Activated T-helper 1 cell treated with anti-CD3 and anti-CD28 coated beads, Interleukin-12 subunit alpha, Interleukin-12 subunit beta, Interleukin-2, Interleukin-4 antibody, amounts not matched to agents 30 ng/mL and 10 ng/mL and 1 ng/mL, durations not matched to agents 14 hours and 24 hours and 36 hours (primary cell): ENCODE measurements at regions of chr1 and their contacts with region 1.

Region 1: GRCh38 chr1:32072622-32073298 is at the start of gene TMEM39B:
- DNase-seq: peak; percentile 93
- H3K4me3 Mint-ChIP-seq: peak within 1 kb of the TSS; percentile 92
- H3K27ac Mint-ChIP-seq: peak within 1 kb of the TSS; percentile 95
- H3K4me1 Mint-ChIP-seq: peaks cover 45% of the 10 kb centered on the region
- H3K27me3 Mint-ChIP-seq: no peaks in the 10 kb centered on the region
- total RNA-seq, gene TMEM39B: 34.2 and 38.8 TPM in 2 replicates

Region 2: DNA sequence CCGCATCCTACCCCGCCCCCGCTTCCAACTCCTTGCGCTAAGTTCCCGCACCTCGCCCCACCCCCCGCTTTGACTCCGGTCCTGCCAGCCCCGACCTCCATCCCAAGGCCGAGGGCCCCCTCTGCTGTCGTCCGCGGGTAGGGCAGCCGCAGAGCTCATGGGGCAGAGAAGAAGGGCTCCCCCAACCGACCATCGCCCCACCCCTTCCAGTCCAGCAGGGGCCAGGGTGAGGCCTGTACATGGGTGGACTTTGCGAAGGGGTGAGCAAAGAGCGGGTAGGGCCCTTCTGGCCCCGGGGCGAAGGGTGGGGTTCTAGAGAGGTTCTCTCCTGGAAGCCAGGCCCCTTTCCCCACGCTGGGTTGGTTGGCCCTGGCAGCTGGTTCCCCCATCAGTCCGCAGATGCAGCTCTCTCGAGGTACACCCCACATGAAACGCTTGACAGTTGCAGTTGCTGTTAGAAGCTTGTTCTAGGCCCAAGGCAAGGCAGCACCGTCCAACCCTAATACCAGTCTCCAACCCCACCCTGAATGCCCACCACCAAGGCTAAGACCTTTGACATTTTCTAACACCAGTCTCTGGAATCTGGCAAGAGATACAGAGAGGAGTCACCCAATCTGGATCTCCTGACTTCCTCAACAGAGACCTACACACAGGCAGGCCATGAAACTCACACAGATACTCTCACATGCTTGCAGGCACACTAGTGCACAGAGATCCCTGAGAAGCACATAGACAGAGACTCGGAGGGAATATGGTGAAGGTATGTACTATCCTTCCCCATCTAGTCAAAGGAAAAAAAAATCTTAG is 283.3 kb before region 1 on chr1:
- intact Hi-C with region 1: loop called (anchors 2 kb)
- DNase-seq: peak; percentile 91
- H3K4me3 Mint-ChIP-seq: peak overlapping the region; percentile 89
- H3K27ac Mint-ChIP-seq: no peak overlapping the region
- H3K4me1 Mint-ChIP-seq: peaks cover 16% of the 10 kb centered on the region
- H3K27me3 Mint-ChIP-seq: peaks cover 4% of the 10 kb centered on the region

Region 3: DNA sequence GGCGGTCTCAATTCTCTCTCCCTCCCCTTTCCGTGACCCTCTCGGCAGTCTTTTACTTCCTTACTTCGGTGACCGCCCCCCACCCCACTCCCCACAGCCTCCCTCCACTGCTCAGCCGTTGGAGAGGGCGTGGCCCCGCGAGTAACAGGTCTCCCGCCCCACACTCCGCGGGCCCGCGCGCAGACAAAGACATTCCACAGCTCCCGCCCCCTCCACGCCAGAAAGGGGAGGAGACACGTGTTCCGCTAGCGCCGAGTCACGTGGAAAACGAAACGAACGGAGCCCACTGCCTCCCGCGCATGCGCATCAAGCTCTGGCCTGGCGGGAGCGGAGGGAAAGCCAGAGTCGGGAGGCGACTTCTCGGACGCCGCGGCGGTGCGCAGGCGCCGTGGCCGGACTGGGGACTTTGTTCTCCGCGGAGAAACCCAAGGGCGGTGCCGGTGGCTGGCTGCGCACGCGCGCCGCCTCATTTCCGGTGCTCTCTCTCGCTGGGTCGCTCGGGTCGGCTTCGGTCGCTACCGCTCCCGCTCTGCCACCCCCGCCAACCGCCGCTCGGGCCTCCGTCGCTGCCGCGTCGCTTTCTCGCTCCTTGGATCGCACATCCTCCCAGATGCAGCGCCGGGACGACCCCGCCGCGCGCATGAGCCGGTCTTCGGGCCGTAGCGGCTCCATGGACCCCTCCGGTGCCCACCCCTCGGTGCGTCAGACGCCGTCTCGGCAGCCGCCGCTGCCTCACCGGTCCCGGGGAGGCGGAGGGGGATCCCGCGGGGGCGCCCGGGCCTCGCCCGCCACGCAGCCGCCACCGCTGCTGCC is 59.2 kb before region 1 on chr1 and contains the start of gene KHDRBS1:
- intact Hi-C with region 1: loop called (anchors 2 kb)
- DNase-seq: peak; percentile 99
- H3K4me3 Mint-ChIP-seq: peak within 1 kb of the TSS; percentile 99
- H3K27ac Mint-ChIP-seq: peak within 1 kb of the TSS; percentile 97
- H3K4me1 Mint-ChIP-seq: peaks cover 31% of the 10 kb centered on the region
- H3K27me3 Mint-ChIP-seq: no peaks in the 10 kb centered on the region
- total RNA-seq, gene KHDRBS1: 156 and 158 TPM in 2 replicates

Region 4: GRCh38 chr1:32179443-32180185 is 106.9 kb after region 1 on chr1 and contains the start of gene TXLNA:
- intact Hi-C with region 1: loop called (anchors 1 kb)
- DNase-seq: peak; percentile 89
- H3K4me3 Mint-ChIP-seq: peak within 1 kb of the TSS; percentile 96
- H3K27ac Mint-ChIP-seq: peak within 1 kb of the TSS; percentile 93
- H3K4me1 Mint-ChIP-seq: peaks cover 47% of the 10 kb centered on the region
- H3K27me3 Mint-ChIP-seq: no peaks in the 10 kb centered on the region
- total RNA-seq, gene TXLNA: 109 and 110 TPM in 2 replicates

Region 5: DNA sequence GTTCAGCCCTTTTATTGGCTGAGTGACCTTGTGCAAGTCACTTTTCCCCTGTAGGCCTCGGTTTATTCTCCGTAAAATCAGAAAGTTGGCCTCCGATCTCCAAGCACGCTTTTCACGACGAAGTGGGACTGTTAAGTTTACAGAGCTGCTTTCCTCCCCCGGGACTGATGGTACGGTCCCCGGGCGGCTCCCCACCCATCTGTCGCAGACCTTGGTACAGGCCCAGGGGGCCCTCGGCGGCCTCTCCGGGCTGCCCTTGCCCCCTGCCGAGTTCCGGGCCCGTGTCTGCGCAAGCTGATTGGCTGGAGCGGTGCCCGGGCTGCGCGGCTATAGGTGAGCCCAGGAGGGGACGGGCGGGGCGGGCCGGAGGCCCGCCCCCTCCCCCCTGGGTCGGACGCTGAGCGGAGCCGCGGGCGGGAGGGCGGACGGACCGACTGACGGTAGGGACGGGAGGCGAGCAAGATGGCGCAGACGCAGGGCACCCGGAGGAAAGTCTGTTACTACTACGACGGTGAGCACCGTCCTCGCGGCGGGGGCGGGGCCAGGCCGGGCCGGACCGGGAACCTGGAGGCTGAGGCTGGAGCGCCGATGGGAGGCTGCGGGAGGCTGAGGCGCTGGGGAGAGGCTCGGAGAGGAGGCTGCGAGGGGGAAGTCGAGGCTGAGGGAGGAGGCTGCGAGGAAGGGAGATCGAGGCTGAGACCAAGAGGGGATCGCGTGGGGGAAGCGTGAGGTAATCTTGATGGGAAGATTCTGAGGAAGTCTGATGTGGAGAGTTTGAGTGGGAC is 219.1 kb after region 1 on chr1 and contains the start of gene HDAC1:
- intact Hi-C with region 1: loop called (anchors 2 kb)
- DNase-seq: peak; percentile 96
- H3K4me3 Mint-ChIP-seq: peak within 1 kb of the TSS; percentile 93
- H3K27ac Mint-ChIP-seq: peak within 1 kb of the TSS; percentile 94
- H3K4me1 Mint-ChIP-seq: peaks cover 37% of the 10 kb centered on the region
- H3K27me3 Mint-ChIP-seq: no peaks in the 10 kb centered on the region
- total RNA-seq, gene HDAC1: 177 and 179 TPM in 2 replicates

Region 6: DNA sequence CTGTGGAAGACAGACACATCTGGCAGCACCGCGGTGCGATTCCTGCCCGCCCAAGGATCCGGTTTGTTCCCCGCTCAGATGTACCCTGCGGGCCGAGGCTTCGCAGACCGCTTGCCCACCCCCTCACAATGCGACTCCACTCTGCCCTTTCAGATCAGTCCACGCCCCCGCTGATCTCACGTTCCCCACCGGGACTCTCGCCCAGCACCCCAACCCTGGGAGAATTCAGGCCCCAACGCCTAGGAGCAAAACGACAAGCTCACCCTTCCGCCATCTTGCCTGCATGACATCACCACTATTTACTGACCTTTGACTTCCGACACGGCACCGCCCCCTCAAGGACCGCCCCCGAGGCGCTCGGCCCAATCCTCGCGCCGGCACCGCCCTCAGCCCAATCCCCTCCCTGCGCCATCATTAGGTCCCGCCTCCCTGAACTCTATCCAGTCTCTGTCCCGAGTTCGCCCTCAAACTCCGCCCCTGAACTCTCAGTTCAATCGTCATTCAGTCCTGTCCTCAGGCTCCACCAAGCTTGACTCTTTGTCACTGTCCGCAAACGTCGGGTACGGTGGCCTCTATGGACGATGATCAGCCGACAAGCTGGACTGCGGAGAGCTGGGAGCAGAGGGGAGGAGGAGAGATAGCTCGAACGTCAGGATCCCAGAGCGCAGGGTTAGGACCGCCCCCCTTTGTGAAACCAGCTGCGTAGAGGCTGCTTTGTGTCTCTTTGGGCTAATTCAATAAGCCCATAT is 321.6 kb after region 1 on chr1 and contains the start of gene BSDC1:
- intact Hi-C with region 1: loop called (anchors 1 kb)
- DNase-seq: peak; percentile 98
- H3K4me3 Mint-ChIP-seq: peak within 1 kb of the TSS; percentile 97
- H3K27ac Mint-ChIP-seq: peak within 1 kb of the TSS; percentile 99
- H3K4me1 Mint-ChIP-seq: peaks cover 16% of the 10 kb centered on the region
- H3K27me3 Mint-ChIP-seq: peaks cover 7% of the 10 kb centered on the region
- total RNA-seq, gene BSDC1: 48.8 and 50.3 TPM in 2 replicates